Psoas muscle (tissue), 8 donors: ENCODE measurements at regions of chr3 and their contacts with region 1.

Region 1: DNA sequence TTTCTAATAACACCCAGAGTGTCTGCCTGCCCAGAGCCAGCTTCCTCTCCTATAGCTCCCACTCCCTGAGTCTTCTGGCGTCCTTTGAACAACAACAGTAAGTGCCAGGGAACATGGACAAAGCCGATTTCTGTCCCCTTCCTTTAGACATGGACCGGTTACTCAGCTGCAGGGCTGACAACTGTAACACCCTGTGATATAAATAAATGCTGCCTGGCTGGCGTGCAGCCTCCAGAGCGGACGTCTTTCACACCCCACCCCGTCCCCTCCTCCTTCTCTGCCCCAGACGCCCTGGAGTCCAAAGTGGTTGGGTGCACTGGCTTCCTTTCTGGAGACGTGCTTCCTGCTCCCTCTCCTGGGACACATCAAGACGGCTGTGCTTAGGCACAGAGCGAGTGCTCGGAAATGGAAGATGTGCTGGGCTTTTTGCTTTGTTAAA is 281.9 kb upstream of the LRRFIP2 start:
- DNase-seq: peak; percentile 79 to 93
- ATAC-seq: peak; percentile 79 to 87 (median 82)
- H3K4me3 ChIP-seq: peak overlapping the region; percentile 42
- H3K27ac ChIP-seq: peak overlapping the region; percentile 87
- H3K4me1 ChIP-seq: peaks cover 64% of the 10 kb centered on the region
- H3K27me3 ChIP-seq: no peaks in the 10 kb centered on the region
- CTCF ChIP-seq: no peak

Region 2: DNA sequence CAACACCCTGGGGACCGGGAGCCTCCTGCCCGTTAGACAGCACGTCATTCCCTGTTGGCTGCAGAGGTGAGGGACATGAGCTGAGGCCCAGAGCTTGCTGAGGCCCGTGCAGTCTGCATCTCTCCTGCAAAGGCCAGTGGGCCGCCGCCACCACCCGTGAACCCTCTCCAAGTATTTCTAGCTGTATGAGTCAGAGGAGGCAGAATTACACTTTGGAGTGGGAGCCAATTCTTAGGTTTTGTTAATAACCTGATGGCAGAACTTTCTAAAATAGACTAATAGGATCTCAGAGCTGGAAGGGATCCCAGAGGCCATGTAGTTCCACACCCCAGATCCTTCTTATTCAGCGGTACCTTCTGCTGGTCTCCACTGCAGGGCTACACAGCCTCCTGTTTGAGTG is 70.2 kb after region 1 on chr3:
- intact Hi-C with region 1: loop called in 1 of 2 experiments (anchors 5 kb)
- DNase-seq: peak; percentile 82 to 91
- ATAC-seq: peak; percentile 97 to 99 (median 99)
- H3K4me3 ChIP-seq: no peak overlapping the region
- H3K27ac ChIP-seq: peak overlapping the region; percentile 80
- H3K4me1 ChIP-seq: peaks cover 21% of the 10 kb centered on the region
- H3K27me3 ChIP-seq: no peaks in the 10 kb centered on the region
- CTCF ChIP-seq: no peak

Region 3: GRCh38 chr3:37543666-37544065 is 87.4 kb after region 1 on chr3:
- intact Hi-C with region 1: loop called in 1 of 2 experiments (anchors 2 kb)
- DNase-seq: peak in 1 of 2 donors; percentile 69
- ATAC-seq: peak; percentile 52 to 86 (median 80)
- H3K4me3 ChIP-seq: no peak overlapping the region
- H3K27ac ChIP-seq: peak overlapping the region; percentile 83
- H3K4me1 ChIP-seq: peaks cover 47% of the 10 kb centered on the region
- H3K27me3 ChIP-seq: no peaks in the 10 kb centered on the region
- CTCF ChIP-seq: no peak